Prostate gland (tissue), 2 donors: ENCODE measurements at regions of chr21 and their contacts with region 1.

Region 1: GRCh38 chr21:35256467-35256988 is 207.4 kb upstream of the RUNX1 start:
- DNase-seq: peak; percentile 87
- H3K4me3 ChIP-seq: peak overlapping the region in 1 of 2 donors; percentile 4
- H3K27ac ChIP-seq: peak overlapping the region; percentile 80 to 85
- H3K4me1 ChIP-seq: no peaks in the 10 kb centered on the region
- H3K27me3 ChIP-seq: no peaks in the 10 kb centered on the region
- CTCF ChIP-seq: peak in 2 of 4 experiments; percentile 18 to 29
- POLR2A ChIP-seq: no peak

Region 2: DNA sequence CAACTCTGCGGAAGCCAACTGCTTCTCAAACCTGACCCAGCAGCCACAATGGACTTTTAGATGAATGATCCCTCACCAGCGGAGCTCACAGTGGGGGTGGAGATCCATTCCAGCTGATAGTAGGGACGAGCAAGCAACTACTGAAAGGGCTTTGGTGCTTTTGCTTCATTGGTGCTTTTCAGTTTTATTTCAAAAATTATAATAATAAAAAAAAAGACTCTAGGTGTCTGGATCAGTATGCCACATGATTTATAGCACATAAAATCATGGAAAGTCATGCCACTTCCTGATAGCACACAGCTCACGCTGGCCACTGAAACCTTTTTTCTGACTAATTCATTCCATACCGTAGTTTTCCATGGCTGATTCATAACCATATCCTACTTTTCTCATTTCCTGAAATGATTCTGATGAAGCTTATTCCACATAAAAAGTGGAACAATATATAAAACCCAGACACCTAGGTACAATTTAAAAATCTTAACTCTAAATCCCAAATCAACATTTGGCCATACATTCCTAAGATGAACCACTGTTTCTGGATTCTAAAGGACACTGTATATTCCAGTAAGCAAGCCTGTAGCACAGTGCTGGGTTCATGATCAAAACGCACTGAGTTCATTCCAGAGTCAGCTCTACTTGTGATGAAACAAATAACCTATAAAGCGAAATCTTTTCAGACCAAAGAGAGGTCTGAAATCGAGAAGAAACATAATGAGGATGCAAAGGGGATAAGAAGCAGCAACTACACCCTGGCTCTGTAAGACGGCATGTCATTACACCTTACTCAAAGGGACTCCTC is 703.2 kb before region 1 on chr21:
- intact Hi-C with region 1: no loop called
- DNase-seq: no peak
- H3K4me3 ChIP-seq: no peak overlapping the region
- H3K27ac ChIP-seq: no peak overlapping the region
- H3K4me1 ChIP-seq: no peaks in the 10 kb centered on the region
- H3K27me3 ChIP-seq: no peaks in the 10 kb centered on the region
- CTCF ChIP-seq: no peak
- POLR2A ChIP-seq: no peak

Region 3: DNA sequence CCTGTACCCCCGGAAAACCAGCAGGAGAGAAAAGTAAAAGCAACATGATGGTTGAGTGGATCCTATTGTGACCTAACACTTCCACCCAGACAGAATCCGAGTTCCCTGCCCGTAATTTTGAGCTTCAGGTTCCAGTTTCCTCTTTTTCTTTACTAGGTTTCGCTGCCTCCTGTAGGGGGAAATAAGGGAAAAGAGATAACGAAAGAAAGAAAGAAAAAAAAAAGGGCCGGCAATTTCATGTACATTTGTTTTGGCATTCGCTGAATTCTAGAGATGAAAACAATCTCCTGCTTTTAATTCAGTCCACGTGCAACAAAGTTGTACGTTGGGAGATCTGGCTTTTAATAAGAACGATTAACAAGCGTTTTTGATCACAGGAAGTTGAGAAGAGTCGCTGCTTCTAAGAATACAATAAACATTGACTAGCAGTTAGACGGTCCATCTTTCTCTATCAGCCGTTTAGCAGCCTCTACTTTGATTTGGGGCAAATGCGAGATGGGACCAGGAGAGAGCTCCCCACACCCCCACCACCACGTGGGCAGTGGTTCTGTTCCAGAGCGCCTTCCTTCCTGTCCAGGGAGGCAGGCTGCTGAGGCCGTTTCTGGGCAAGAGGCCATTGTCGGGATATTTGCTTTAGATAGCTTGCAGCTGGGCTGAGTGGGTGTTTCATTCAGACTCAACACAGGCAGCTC is 51.5 kb before region 1 on chr21:
- intact Hi-C with region 1: loop called (anchors 5 kb)
- DNase-seq: peak; percentile 21
- H3K4me3 ChIP-seq: no peak overlapping the region
- H3K27ac ChIP-seq: peak overlapping the region; percentile 29 to 59
- H3K4me1 ChIP-seq: no peaks in the 10 kb centered on the region
- H3K27me3 ChIP-seq: no peaks in the 10 kb centered on the region
- CTCF ChIP-seq: no peak
- POLR2A ChIP-seq: no peak

Region 4: GRCh38 chr21:35324372-35325220 is 68.1 kb after region 1 on chr21:
- intact Hi-C with region 1: loop called (anchors 2 kb)
- DNase-seq: peak; percentile 28
- H3K4me3 ChIP-seq: no peak overlapping the region
- H3K27ac ChIP-seq: peak overlapping the region; percentile 51 to 74
- H3K4me1 ChIP-seq: peaks cover 18% of the 10 kb centered on the region
- H3K27me3 ChIP-seq: no peaks in the 10 kb centered on the region
- CTCF ChIP-seq: no peak
- POLR2A ChIP-seq: no peak

Region 5: DNA sequence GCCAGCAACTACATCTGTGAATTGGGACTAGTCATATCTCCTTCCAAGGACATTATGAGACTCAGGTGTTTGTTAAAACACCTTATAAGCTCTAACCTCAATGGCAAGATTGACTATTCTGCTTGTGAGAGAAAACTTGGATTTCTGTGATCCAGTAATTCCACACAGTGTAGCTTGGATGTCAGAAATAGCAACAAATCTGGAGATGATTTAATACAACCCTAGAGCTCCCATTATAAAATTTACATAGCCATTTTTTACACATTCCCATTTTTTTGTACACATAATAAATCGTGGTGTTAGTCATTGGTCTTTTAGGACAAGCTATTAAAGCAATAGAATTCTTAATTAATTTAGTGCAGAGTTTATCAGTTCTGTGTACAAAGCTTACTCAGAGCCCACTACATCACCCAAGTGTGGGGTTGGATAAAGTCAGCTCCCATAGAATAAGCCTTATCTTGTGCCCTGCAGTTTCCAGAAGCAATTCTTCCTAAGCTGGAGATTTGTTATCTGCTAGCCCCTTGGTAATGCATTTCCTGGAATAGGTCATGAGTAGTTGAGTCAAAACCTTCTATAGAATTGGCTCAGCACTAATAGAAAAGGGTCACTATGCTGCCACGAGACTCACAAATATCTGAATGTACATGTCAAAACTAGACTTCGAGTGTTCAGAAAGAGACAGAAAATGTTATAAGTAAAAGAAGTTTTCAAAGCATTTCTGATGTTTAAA is 226.6 kb after region 1 on chr21:
- intact Hi-C with region 1: no loop called
- DNase-seq: no peak
- H3K4me3 ChIP-seq: no peak overlapping the region
- H3K27ac ChIP-seq: no peak overlapping the region
- H3K4me1 ChIP-seq: no peaks in the 10 kb centered on the region
- H3K27me3 ChIP-seq: no peaks in the 10 kb centered on the region
- CTCF ChIP-seq: no peak
- POLR2A ChIP-seq: no peak